CD8-positive, alpha-beta memory T cell (primary cell): ENCODE measurements at regions of chr2 and their contacts with region 1.

Region 1: DNA sequence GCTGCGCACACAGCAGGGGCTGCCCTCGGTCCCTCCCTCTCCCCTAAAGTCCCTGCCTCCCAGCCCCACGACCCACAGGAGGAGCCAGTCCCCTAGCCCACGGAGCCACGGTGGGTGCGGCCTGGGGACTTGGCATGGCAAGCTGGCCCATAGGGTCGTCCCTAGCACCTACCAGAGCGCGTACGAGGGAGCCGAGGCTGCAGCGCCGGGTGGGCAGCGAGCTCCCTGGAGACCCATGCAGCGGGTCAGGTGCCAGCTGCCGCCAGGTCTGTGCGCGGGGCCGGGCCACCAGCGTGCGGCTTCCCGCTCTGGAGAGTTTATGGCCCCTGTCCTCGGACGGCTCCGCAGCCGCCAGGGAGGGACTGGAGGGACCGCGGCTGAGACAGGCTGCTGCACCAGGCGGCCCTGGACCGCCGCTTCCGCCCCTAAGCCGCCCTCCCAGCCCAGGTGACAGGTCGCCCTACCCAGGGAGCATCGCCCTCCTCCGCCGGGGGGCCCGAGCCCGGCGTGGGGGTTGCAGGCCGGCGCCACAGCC is 273.6 kb downstream of the CCDC74A start:
- DNase-seq: no peak
- H3K4me3 ChIP-seq: no peak overlapping the region
- H3K4me3 Mint-ChIP-seq: peak overlapping the region in 2 of 7 donors; percentile 12 to 65
- H3K27ac ChIP-seq: no peak overlapping the region
- H3K27ac Mint-ChIP-seq: no peak overlapping the region
- H3K4me1 ChIP-seq: no peaks in the 10 kb centered on the region
- H3K4me1 Mint-ChIP-seq: peaks cover 4 to 10% (median 8%) of the 10 kb centered on the region in 3 donors
- H3K27me3 ChIP-seq: no peaks in the 10 kb centered on the region
- H3K27me3 Mint-ChIP-seq: peaks cover 2 to 14% of the 10 kb centered on the region in 2 donors

Region 2: GRCh38 chr2:131154071-131154531 is 647.2 kb before region 1 on chr2:
- CTCF ChIA-PET with region 1: interaction called, 12 read pairs
- POLR2A ChIA-PET with region 1: no interaction called
- DNase-seq: peak; percentile 48 to 75 (median 50)
- H3K4me3 ChIP-seq: no peak overlapping the region
- H3K4me3 Mint-ChIP-seq: peak overlapping the region in 2 of 7 donors; percentile 29 to 38
- H3K27ac ChIP-seq: no peak overlapping the region
- H3K27ac Mint-ChIP-seq: peak overlapping the region in 5 of 8 donors; percentile 1 to 63 (median 31)
- H3K4me1 ChIP-seq: peaks cover 12% of the 10 kb centered on the region
- H3K4me1 Mint-ChIP-seq: peaks cover 15 to 27% (median 19%) of the 10 kb centered on the region in 3 donors
- H3K27me3 ChIP-seq: no peaks in the 10 kb centered on the region
- H3K27me3 Mint-ChIP-seq: no peaks in the 10 kb centered on the region

Region 3: GRCh38 chr2:131410173-131410572 is 391.1 kb before region 1 on chr2:
- CTCF ChIA-PET with region 1: no interaction called
- POLR2A ChIA-PET with region 1: no interaction called
- DNase-seq: no peak
- H3K4me3 ChIP-seq: no peak overlapping the region
- H3K4me3 Mint-ChIP-seq: no peak overlapping the region
- H3K27ac ChIP-seq: no peak overlapping the region
- H3K27ac Mint-ChIP-seq: no peak overlapping the region
- H3K4me1 ChIP-seq: no peaks in the 10 kb centered on the region
- H3K4me1 Mint-ChIP-seq: peaks cover 0 to 5% (median 1%) of the 10 kb centered on the region in 3 donors
- H3K27me3 ChIP-seq: peaks cover 7% of the 10 kb centered on the region
- H3K27me3 Mint-ChIP-seq: peaks cover 15 to 49% of the 10 kb centered on the region in 2 donors

Region 4: DNA sequence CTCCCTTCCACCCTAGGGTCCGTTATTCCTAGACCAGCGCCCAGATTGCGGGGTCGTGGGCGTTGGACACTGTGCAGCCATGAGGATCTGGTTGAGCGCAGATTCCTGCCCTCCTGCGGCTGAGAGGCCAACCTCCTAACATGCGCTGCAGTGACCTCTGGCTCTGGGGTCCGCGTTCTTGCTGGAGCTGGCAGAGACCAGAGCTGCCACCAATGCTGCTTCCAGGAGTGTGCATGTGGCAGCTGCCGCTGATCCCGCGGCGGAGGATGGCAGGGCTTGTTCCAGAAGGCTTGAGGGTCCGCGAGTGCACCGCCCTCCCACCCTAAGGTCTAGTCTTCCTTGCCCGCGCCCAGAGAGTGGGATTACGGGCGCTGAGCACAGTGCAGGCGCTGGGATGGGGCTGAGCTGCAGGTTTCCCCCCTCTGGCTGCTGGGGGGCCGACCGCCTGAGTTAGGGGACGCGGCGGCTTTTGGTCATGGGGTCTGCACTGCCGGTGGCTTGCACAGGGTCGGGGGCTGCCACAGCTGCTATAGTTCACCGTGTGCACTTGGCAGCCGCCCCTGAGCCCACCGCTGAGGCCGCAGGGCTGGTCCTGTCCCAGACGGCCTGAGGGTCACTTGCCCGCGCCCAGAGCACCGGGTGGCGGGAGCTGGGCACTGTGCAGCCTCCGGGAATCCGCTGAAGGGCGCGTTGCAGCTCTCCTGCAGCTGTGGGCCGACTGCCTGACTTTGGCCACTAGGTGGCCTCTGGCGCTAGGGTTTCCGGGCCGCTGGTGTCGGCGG is 127.7 kb before region 1 on chr2:
- CTCF ChIA-PET with region 1: interaction called, 19 read pairs
- POLR2A ChIA-PET with region 1: no interaction called
- DNase-seq: peak; percentile 20 to 71 (median 51)
- H3K4me3 ChIP-seq: peak overlapping the region; percentile 34
- H3K4me3 Mint-ChIP-seq: peak overlapping the region; percentile 45 to 85 (median 71)
- H3K27ac ChIP-seq: no peak overlapping the region
- H3K27ac Mint-ChIP-seq: peak overlapping the region in 2 of 8 donors; percentile 14 to 58
- H3K4me1 ChIP-seq: peaks cover 14% of the 10 kb centered on the region
- H3K4me1 Mint-ChIP-seq: peaks cover 4 to 16% (median 6%) of the 10 kb centered on the region in 3 donors
- H3K27me3 ChIP-seq: peaks cover 20% of the 10 kb centered on the region
- H3K27me3 Mint-ChIP-seq: peaks cover 31 to 41% of the 10 kb centered on the region in 2 donors

Region 5: DNA sequence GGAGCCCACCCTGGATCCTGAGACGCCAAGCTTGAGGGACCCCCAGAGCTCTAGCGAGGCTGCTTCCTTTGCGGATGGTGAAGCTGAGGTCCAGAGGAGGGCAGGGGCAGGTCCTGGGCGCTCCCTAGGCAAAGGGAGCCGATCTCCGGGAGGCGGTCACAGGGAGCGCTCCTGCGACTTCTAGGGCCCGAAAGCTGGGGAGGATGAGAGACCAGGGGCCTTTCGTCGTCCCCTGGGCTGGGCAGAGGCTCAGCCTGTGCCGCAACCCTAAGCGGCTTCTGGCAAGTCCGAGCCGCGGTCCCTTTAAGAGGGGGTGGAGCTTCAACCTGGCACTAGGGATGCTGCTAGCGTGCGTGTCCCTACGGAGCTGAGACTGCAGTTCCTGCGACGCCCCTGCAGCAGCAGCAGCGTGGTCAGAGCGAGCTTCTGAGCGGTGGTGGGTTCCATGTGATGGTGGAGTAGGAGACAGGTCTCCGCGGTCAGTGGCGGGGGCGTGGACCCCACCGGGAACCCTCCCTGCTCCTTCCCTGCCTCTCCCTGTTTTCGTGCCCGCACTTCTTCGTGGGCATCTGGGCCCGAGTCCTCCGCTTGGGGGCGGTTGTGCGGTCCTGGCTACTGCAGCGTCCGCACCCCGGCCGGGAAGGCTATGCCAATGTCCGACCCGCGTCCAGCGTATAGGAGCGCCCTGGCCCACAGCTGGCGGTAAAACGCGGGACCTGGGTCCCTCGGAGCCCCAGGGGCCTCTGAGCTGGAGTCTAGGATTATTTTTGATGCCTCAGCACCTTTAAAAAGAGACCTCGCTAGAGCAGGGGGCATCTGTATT is 118.9 kb before region 1 on chr2:
- CTCF ChIA-PET with region 1: interaction called, 10 read pairs
- POLR2A ChIA-PET with region 1: no interaction called
- DNase-seq: peak; percentile 45 to 85 (median 67)
- H3K4me3 ChIP-seq: peak overlapping the region; percentile 77
- H3K4me3 Mint-ChIP-seq: peak overlapping the region; percentile 83 to 99 (median 91)
- H3K27ac ChIP-seq: peak overlapping the region; percentile 38
- H3K27ac Mint-ChIP-seq: peak overlapping the region in 7 of 8 donors; percentile 13 to 97 (median 84)
- H3K4me1 ChIP-seq: peaks cover 3% of the 10 kb centered on the region
- H3K4me1 Mint-ChIP-seq: peaks cover 38 to 45% (median 41%) of the 10 kb centered on the region in 3 donors
- H3K27me3 ChIP-seq: no peaks in the 10 kb centered on the region
- H3K27me3 Mint-ChIP-seq: no peaks in the 10 kb centered on the region

Region 6: GRCh38 chr2:133026536-133027177 is 1225.4 kb after region 1 on chr2:
- CTCF ChIA-PET with region 1: no interaction called
- POLR2A ChIA-PET with region 1: no interaction called
- DNase-seq: no peak
- H3K4me3 ChIP-seq: no peak overlapping the region
- H3K4me3 Mint-ChIP-seq: no peak overlapping the region
- H3K27ac ChIP-seq: no peak overlapping the region
- H3K27ac Mint-ChIP-seq: no peak overlapping the region
- H3K4me1 ChIP-seq: no peaks in the 10 kb centered on the region
- H3K4me1 Mint-ChIP-seq: no peaks in the 10 kb centered on the region
- H3K27me3 ChIP-seq: no peaks in the 10 kb centered on the region
- H3K27me3 Mint-ChIP-seq: peaks cover 0 to 3% of the 10 kb centered on the region in 2 donors